Activated naive CD4-positive, alpha-beta T cell treated with anti-CD3 and anti-CD28 coated beads, Interleukin-2, amount 10 ng/mL, durations not matched to agents 7 days and 5 days (primary cell): ENCODE measurements at regions of chr4 and their contacts with region 1.

Region 1: GRCh38 chr4:163544407-163545038 is 50.0 kb downstream of the TMA16 start:
- DNase-seq: peak; percentile 69
- H3K4me3 Mint-ChIP-seq: no peak overlapping the region
- H3K27ac Mint-ChIP-seq: no peak overlapping the region
- H3K4me1 Mint-ChIP-seq: peaks cover 12% of the 10 kb centered on the region
- H3K27me3 Mint-ChIP-seq: no peaks in the 10 kb centered on the region

Region 2: DNA sequence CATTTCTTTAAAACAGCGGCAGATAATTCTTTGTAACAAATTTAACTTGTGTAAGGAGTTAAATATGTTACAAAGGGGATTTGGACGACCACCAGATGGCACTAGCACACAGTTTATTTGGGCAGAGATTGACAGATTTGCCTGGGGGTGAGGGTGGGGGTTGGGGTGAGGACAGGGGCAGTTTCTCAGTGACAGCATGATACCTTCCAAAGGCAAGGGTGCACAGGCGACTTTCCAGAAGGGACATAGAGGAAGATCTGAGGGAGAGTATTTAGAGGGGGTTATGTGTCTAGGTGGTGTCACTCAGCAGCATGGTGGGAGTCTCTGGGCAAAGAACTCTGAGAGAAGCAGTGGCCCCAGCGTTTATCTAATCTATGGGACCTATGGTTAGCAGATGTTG is 59.6 kb before region 1 on chr4:
- CTCF ChIA-PET with region 1: interaction called, 37 read pairs
- DNase-seq: peak; percentile 71
- H3K4me3 Mint-ChIP-seq: no peak overlapping the region
- H3K27ac Mint-ChIP-seq: no peak overlapping the region
- H3K4me1 Mint-ChIP-seq: no peaks in the 10 kb centered on the region
- H3K27me3 Mint-ChIP-seq: peaks cover 27% of the 10 kb centered on the region

Region 3: GRCh38 chr4:163494360-163495162 is 50.0 kb before region 1 on chr4 and contains the start of gene TMA16:
- CTCF ChIA-PET with region 1: interaction called, 24 read pairs
- DNase-seq: peak; percentile 91
- H3K4me3 Mint-ChIP-seq: peak within 1 kb of the TSS; percentile 100
- H3K27ac Mint-ChIP-seq: peak within 1 kb of the TSS; percentile 98
- H3K4me1 Mint-ChIP-seq: peaks cover 37% of the 10 kb centered on the region
- H3K27me3 Mint-ChIP-seq: peaks cover 13% of the 10 kb centered on the region

Region 4: GRCh38 chr4:163681208-163681821 is 136.8 kb after region 1 on chr4:
- CTCF ChIA-PET with region 1: interaction called, 25 read pairs
- DNase-seq: peak; percentile 37
- H3K4me3 Mint-ChIP-seq: no peak overlapping the region
- H3K27ac Mint-ChIP-seq: peak overlapping the region; percentile 43
- H3K4me1 Mint-ChIP-seq: no peaks in the 10 kb centered on the region
- H3K27me3 Mint-ChIP-seq: no peaks in the 10 kb centered on the region